Left cardiac atrium (tissue), 4 donors: ENCODE measurements at regions of chr19 and their contacts with region 1.

Region 1: GRCh38 chr19:34712395-34713261 is 21.4 kb upstream of the ZNF181 start:
- DNase-seq: no peak
- ATAC-seq: peak; percentile 72 to 74

Region 2: DNA sequence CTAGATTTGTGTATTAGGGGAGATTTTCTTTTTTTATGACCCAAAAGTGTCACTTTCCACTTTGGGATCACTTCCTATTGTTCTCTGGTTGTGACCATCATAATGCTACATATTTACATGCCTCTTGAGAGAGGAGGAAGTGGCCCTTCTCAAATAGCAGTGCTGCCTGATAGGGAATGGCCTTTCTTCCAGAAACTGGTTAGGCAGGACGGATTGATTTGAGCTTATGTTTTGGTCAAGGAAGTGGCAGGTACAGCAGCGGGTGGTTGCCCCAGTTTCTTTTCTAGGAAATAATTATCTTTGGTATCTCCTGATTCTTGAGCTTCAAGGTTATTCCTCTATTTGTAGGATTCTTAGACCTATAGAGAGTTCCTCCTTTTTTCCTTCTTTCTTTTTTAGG is 253.0 kb before region 1 on chr19:
- intact Hi-C with region 1: no loop called
- DNase-seq: no peak
- ATAC-seq: no peak

Region 3: DNA sequence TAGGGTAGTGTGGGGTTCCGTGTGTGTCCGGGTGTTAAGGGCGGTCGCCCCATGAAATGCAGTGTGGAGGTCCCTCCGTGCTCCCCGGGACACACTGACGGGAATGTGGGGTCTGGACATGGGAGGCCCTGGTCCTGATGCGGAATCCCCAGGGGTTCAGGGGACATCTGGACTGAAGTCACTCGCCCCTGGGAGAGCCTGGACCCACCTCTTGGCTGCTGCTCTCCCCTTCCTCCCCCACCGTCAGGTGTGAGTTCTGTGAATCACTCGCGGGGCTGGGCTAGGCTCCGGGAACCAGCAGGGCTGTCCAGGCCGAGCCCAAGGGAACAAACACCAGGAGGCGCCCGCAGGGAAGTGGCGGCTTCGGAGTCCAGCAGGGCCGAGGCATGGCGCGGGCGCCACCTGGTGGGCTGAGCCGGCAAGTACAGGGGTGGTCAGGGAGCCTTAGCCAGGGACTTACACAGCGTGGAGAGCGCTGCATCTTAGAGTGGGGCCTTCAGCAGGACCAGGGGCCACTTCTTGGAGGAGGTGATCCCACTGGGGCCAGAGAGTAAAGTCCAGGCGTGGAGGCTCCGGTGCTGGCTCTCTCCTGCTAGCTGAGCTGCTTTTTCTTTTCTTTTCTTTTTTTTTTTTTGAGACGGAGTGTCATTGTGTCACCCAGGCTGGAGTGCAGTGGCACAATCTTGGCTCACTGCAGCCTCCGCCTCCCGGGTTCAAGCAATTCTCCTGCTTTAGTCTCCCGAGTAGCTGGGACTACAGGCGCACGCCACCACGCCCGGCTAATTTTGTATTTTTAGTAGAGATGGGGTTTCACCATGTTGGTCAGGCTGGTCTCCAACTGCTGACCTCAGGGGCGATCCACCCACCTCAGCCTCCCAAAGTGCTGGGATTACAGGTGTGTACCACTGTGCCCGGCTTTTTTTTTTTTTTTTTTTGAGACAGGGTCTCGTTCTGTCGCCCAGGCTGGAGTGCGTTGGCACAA is 211.0 kb before region 1 on chr19:
- intact Hi-C with region 1: loop called (anchors 1 to 5 kb)
- DNase-seq: peak; percentile 92
- ATAC-seq: peak; percentile 80 to 86

Region 4: DNA sequence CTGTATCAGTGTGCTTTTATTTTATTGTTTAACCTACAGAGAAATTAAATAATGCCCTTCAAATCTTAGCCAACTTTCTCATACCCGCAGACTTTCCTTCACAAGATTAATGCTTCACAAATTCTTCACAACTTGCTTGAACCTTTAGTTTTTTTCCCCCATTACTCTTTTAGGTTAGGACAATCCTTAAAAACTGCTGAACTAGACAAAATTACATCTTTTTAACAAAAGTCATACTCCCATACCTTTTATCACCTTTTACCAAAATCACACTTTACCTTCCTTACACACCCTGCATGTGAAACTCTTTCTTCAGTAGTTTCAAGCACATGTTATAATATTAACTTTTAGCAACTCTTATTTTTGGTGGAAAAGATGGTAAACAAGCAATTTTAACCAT is 94.2 kb before region 1 on chr19:
- intact Hi-C with region 1: no loop called
- DNase-seq: no peak
- ATAC-seq: no peak

Region 5: DNA sequence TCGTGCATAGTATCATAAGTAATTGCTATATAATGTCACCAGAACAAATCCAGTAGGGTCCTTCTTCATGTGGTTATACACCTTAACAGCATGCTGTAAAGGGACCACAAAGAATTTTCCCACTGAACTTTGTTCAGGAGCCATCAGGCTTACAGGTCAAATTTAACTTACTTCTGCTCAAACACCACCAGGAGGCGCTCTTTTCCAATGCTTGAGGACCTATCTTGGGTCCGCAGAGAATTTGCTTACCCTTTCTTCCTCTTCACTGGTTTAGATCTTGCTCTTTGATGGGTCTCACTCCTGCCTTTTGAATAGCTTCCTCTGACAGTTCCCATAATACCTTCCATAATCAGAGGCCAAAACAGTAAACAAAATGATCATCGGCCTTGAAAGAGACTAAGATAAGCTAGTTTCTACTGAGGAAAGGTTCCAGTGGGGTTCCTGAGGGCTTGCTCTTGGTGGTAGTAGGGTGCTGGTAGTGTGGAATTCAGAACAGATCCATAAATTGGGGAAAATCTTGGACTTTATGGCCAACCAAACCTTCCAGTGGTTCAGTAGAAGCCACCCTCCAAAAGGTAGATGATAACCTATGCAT is 73.0 kb before region 1 on chr19:
- intact Hi-C with region 1: loop called (anchors 2 kb)
- DNase-seq: peak; percentile 48
- ATAC-seq: peak in 1 of 2 donors; percentile 70